Activated CD4-positive, alpha-beta T cell treated with anti-CD3 and anti-CD28 coated beads for 36 hours (primary cell): ENCODE measurements at regions of chr13 and their contacts with region 1.

Region 1: GRCh38 chr13:41222259-41222852 is 28.0 kb upstream of the KBTBD7 start:
- DNase-seq: peak; percentile 66
- ATAC-seq: peak; percentile 97
- H3K4me3 Mint-ChIP-seq: no peak overlapping the region
- H3K27ac Mint-ChIP-seq: no peak overlapping the region
- H3K4me1 Mint-ChIP-seq: no peaks in the 10 kb centered on the region
- H3K27me3 Mint-ChIP-seq: no peaks in the 10 kb centered on the region

Region 2: GRCh38 chr13:41075034-41075433 is 147.3 kb before region 1 on chr13:
- CTCF ChIA-PET with region 1: interaction called, 12 read pairs
- POLR2A ChIA-PET with region 1: no interaction called
- intact Hi-C with region 1: loop called (anchors 1 kb)
- DNase-seq: peak; percentile 32
- ATAC-seq: no peak
- H3K4me3 Mint-ChIP-seq: no peak overlapping the region
- H3K27ac Mint-ChIP-seq: no peak overlapping the region
- H3K4me1 Mint-ChIP-seq: peaks cover 2% of the 10 kb centered on the region
- H3K27me3 Mint-ChIP-seq: no peaks in the 10 kb centered on the region

Region 3: GRCh38 chr13:41820581-41821237 is 598.4 kb after region 1 on chr13:
- CTCF ChIA-PET with region 1: no interaction called
- POLR2A ChIA-PET with region 1: no interaction called
- intact Hi-C with region 1: no loop called
- DNase-seq: no peak
- ATAC-seq: no peak
- H3K4me3 Mint-ChIP-seq: no peak overlapping the region
- H3K27ac Mint-ChIP-seq: no peak overlapping the region
- H3K4me1 Mint-ChIP-seq: no peaks in the 10 kb centered on the region
- H3K27me3 Mint-ChIP-seq: no peaks in the 10 kb centered on the region